ENCODE measurements at regions of chr20 and their contacts with region 1.

Region 1: GRCh38 chr20:46406199-46406985 is at the start of gene ELMO2:
- DNase-seq: peak; percentile 89 to 98 (median 96)
- ATAC-seq: peak; percentile 90
- H3K4me3 ChIP-seq: peak within 1 kb of the TSS; percentile 89 to 91
- H3K4me3 Mint-ChIP-seq: peak within 1 kb of the TSS; percentile 99
- H3K27ac ChIP-seq: peak within 1 kb of the TSS; percentile 72 to 82
- H3K27ac Mint-ChIP-seq: peak within 1 kb of the TSS; percentile 98
- H3K4me1 ChIP-seq: peaks cover 53% of the 10 kb centered on the region
- H3K4me1 Mint-ChIP-seq: peaks cover 70% of the 10 kb centered on the region
- H3K27me3 ChIP-seq: no peaks in the 10 kb centered on the region
- H3K27me3 Mint-ChIP-seq: no peaks in the 10 kb centered on the region
- CTCF ChIP-seq: no peak
- total RNA-seq, gene ELMO2: 59.2 to 62.8 TPM

Region 2: DNA sequence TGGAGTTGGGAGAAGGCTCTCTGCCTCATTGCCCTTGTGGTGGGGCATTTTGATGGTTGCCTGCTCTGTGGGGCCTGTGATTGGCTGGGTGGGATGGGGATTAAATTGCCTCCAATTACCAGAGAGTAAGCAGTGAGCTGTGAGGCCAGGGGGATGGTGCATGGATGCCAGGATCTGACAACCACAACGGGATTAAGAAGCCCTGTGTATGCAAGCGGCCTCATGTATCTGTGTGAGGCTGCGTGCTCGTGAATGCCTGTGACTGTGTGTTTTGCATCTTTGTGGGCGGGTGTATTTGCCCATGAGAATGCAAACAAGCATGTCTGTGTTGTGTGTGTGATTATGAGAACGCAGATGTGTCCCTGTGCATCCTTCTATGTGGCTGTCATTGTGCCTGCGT is 242.1 kb before region 1 on chr20:
- CTCF ChIA-PET with region 1: no interaction called
- POLR2A ChIA-PET with region 1: no interaction called
- intact Hi-C with region 1: no loop called
- DNase-seq: no peak
- ATAC-seq: no peak
- H3K4me3 ChIP-seq: no peak overlapping the region
- H3K4me3 Mint-ChIP-seq: no peak overlapping the region
- H3K27ac ChIP-seq: no peak overlapping the region
- H3K27ac Mint-ChIP-seq: no peak overlapping the region
- H3K4me1 ChIP-seq: no peaks in the 10 kb centered on the region
- H3K4me1 Mint-ChIP-seq: no peaks in the 10 kb centered on the region
- H3K27me3 ChIP-seq: peaks cover 0 to 4% of the 10 kb centered on the region in 2 experiments
- H3K27me3 Mint-ChIP-seq: peaks cover 40% of the 10 kb centered on the region
- CTCF ChIP-seq: no peak

Region 3: DNA sequence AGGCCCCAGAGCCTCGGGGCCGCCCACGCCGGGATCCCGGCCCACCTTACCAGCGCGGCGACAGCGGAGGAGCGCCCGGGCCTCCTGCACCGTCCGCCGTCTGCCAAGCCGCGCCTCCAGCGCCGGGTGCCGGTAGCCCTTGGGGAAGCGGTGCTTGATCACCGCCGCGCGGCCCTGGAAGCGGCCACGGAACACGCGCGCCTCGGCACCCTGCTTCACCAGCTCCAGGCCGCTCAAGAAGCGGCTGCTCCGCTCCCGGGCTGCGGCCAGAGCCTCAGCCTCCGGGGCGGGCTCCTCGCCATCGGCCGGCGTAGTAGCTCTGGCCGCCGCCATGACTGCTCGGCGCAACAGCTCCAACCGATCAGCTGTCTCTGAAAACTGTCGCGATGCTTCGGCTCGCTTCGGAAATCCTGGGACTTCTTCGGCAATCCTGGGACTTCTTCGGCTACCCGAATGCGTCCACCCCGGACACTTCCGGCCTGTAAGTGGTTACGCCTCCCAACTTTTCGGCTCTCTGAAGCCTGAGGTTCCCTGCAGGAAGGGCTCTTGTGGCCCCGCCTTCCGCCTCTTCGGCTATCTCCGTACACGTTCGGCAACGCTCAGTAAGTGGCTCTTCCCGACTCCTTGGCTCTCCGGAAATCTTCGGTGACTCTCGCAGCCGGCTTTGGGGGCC is 282.8 kb after region 1 on chr20 and contains the start of gene TP53RK:
- CTCF ChIA-PET with region 1: no interaction called
- POLR2A ChIA-PET with region 1: no interaction called
- intact Hi-C with region 1: loop called in 1 of 2 experiments (anchors 1 kb)
- DNase-seq: peak; percentile 89 to 99 (median 96)
- ATAC-seq: peak; percentile 96
- H3K4me3 ChIP-seq: peak within 1 kb of the TSS; percentile 92 to 96
- H3K4me3 Mint-ChIP-seq: peak within 1 kb of the TSS; percentile 100
- H3K27ac ChIP-seq: peak within 1 kb of the TSS; percentile 74 to 83
- H3K27ac Mint-ChIP-seq: peak within 1 kb of the TSS; percentile 99
- H3K4me1 ChIP-seq: peaks cover 42% of the 10 kb centered on the region
- H3K4me1 Mint-ChIP-seq: peaks cover 57% of the 10 kb centered on the region
- H3K27me3 ChIP-seq: no peaks in the 10 kb centered on the region
- H3K27me3 Mint-ChIP-seq: no peaks in the 10 kb centered on the region
- CTCF ChIP-seq: no peak
- total RNA-seq, gene TP53RK: 5.4 TPM

Measured in CD8-positive, alpha-beta T cell (primary cell).